ENCODE measurements at regions of chr9 and their contacts with region 1.

Region 1: DNA sequence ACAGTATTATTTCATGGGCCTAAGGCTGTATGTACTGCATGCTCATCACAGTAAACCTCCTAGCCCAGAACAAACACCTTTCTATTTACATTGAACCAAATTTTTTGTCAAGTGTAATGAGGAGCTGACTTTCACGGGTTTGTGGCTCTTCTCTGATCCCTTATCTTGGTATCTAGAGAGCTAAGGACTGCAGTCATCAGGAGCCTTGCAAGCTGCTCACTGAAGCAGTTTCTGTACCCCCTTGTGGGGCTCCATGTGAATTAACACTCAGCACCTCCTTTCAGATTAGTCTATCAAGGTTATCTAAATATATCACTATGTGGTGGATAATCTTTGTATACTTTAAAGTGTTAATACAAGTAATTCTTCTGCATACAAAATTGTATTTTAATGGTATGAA is 108.2 kb downstream of the AUH start:
- DNase-seq: peak; percentile 74
- ATAC-seq: peak; percentile 99
- H3K4me3 Mint-ChIP-seq: no peak overlapping the region
- H3K27ac Mint-ChIP-seq: no peak overlapping the region
- H3K4me1 Mint-ChIP-seq: peaks cover 48% of the 10 kb centered on the region
- H3K27me3 Mint-ChIP-seq: no peaks in the 10 kb centered on the region

Region 2: GRCh38 chr9:90259311-90260246 is 993.9 kb before region 1 on chr9:
- CTCF ChIA-PET with region 1: no interaction called
- POLR2A ChIA-PET with region 1: no interaction called
- DNase-seq: no peak
- ATAC-seq: no peak
- H3K4me3 Mint-ChIP-seq: no peak overlapping the region
- H3K27ac Mint-ChIP-seq: no peak overlapping the region
- H3K4me1 Mint-ChIP-seq: no peaks in the 10 kb centered on the region
- H3K27me3 Mint-ChIP-seq: peaks cover 7% of the 10 kb centered on the region

Region 3: GRCh38 chr9:91036826-91037510 is 216.5 kb before region 1 on chr9:
- CTCF ChIA-PET with region 1: interaction called, 11 read pairs
- POLR2A ChIA-PET with region 1: no interaction called
- DNase-seq: peak; percentile 87
- ATAC-seq: peak; percentile 96
- H3K4me3 Mint-ChIP-seq: peak overlapping the region; percentile 33
- H3K27ac Mint-ChIP-seq: peak overlapping the region; percentile 74
- H3K4me1 Mint-ChIP-seq: peaks cover 69% of the 10 kb centered on the region
- H3K27me3 Mint-ChIP-seq: peaks cover under 1% of the 10 kb centered on the region

Region 4: GRCh38 chr9:91089405-91090129 is 163.9 kb before region 1 on chr9:
- CTCF ChIA-PET with region 1: interaction called, 27 read pairs
- POLR2A ChIA-PET with region 1: no interaction called
- DNase-seq: peak; percentile 54
- ATAC-seq: no peak
- H3K4me3 Mint-ChIP-seq: no peak overlapping the region
- H3K27ac Mint-ChIP-seq: peak overlapping the region; percentile 48
- H3K4me1 Mint-ChIP-seq: peaks cover 38% of the 10 kb centered on the region
- H3K27me3 Mint-ChIP-seq: no peaks in the 10 kb centered on the region

Region 5: GRCh38 chr9:91966503-91966902 is 713.0 kb after region 1 on chr9:
- CTCF ChIA-PET with region 1: no interaction called
- POLR2A ChIA-PET with region 1: no interaction called
- DNase-seq: no peak
- ATAC-seq: no peak
- H3K4me3 Mint-ChIP-seq: no peak overlapping the region
- H3K27ac Mint-ChIP-seq: no peak overlapping the region
- H3K4me1 Mint-ChIP-seq: no peaks in the 10 kb centered on the region
- H3K27me3 Mint-ChIP-seq: peaks cover 22% of the 10 kb centered on the region

Measured in activated CD8-positive, alpha-beta T cell treated with anti-CD3 and anti-CD28 coated beads, Interleukin-2, amount 10 ng/mL, durations not matched to agents 7 days and 5 days (primary cell).